ENCODE measurements at regions of chr16 and their contacts with region 1.

Region 1: DNA sequence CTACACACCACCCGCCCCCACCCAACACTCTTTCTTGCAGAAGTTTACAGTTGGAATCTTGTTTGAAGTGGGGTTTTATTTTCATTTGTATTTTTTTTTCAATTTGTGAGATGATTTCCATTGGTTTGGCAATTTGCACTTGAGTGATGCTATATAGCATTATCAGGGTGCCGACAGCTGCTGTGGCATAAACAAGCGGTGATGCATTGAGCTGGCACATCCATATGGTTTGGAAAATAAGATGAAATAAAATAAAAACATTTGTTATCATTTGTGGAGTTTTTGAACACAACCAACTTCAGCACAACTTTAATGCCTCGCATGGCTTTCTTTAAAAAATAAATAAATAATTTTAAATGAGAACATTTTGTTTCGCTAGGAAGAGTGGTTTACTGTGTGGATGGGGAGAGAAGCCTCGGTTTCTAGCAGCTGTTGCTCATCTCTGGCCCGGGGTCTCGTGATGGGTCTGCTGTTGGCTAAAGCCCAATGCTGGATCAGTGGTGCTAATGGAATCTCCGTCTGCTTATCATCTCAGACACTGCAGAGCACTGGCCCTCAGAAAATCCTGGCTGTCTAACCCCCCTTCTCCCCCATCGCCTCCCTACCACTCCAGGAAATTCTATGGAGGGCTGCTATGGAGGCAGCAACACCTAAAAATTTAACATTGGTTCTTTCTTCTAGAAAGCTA is 192.3 kb upstream of the MAF start:
- DNase-seq: no peak

Region 2: DNA sequence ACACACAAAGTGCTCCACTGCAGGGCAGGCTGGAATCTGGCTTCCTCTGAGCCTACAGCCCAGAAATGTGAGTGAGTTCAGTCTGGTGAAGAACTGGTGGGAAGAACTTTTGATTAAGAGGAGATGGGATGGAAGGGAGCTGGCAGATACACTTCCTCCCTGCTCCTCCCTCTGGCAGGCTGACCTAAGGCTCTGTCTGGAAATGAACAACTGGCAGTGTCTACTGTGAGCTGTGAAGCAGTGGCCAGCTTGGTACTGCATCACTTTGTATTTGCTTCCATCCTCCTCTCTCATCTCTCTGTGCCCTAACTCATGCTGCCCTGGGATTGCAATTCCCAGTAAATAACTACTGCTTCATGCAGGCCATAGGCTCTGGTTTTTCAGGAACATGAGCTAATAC is 237.9 kb before region 1 on chr16:
- intact Hi-C with region 1: no loop called
- DNase-seq: no peak

Region 3: DNA sequence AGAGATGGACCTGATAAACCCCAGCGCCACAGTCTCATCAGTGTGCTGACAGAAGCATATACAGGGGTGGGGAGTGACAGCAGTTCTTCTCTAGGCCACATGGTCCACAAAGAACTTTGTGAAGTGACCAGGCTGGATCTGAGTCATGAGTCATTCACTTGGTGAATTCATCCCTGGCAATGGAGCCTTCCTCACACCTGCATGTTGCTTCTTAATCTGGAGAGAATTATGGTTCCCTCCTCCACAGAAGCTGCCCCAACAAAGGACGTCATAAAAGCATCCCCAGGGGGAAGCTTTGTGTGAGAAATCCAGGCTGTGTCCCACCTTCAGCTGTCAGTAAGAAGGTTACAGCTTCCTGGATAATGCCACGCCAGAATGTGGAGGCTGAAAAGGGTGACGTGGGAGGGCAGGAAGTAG is 23.3 kb after region 1 on chr16:
- intact Hi-C with region 1: no loop called
- DNase-seq: no peak

Region 4: GRCh38 chr16:80065568-80065967 is 272.8 kb after region 1 on chr16:
- intact Hi-C with region 1: loop called in 1 of 2 experiments (anchors 5 kb)
- DNase-seq: no peak